ENCODE measurements at regions of chr22 and their contacts with region 1.

Region 1: GRCh38 chr22:34111210-34111824 is 191.0 kb upstream of the LARGE1 start:
- DNase-seq: peak; percentile 13 to 23
- H3K4me3 ChIP-seq: no peak overlapping the region
- H3K27ac ChIP-seq: no peak overlapping the region
- H3K4me1 ChIP-seq: no peaks in the 10 kb centered on the region
- H3K27me3 ChIP-seq: no peaks in the 10 kb centered on the region
- CTCF ChIP-seq: peak in 5 of 6 experiments; percentile 45 to 77 (median 49)
- POLR2A ChIP-seq: no peak

Region 2: DNA sequence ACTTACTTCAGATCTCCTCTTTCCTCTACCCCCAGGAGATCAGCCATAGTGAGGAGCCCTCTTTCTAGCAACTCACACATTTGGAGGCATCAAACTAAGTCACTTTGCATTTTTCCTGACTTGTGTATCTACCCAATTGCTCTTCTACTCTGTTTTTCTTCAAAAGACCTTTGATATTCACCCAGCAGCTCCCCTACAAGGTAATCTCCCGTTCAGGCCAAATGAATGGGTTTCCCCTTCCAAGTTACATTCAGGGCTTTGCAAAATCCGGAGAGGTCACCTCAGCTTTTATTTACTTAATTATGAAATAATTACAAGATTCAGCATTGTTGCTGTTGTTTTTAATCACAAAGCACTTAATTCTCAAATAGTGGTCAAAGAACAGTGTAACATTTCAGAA is 197.2 kb before region 1 on chr22:
- intact Hi-C with region 1: no loop called
- DNase-seq: no peak
- H3K4me3 ChIP-seq: no peak overlapping the region
- H3K27ac ChIP-seq: no peak overlapping the region
- H3K4me1 ChIP-seq: peaks cover 0 to 4% of the 10 kb centered on the region in 2 donors
- H3K27me3 ChIP-seq: no peaks in the 10 kb centered on the region
- CTCF ChIP-seq: no peak
- POLR2A ChIP-seq: no peak

Region 3: GRCh38 chr22:33925194-33925593 is 186.1 kb before region 1 on chr22:
- intact Hi-C with region 1: loop called (anchors 5 kb)
- DNase-seq: no peak
- H3K4me3 ChIP-seq: no peak overlapping the region
- H3K27ac ChIP-seq: no peak overlapping the region
- H3K4me1 ChIP-seq: peaks cover 10 to 17% of the 10 kb centered on the region in 2 donors
- H3K27me3 ChIP-seq: no peaks in the 10 kb centered on the region
- CTCF ChIP-seq: no peak
- POLR2A ChIP-seq: no peak

Region 4: GRCh38 chr22:33958741-33959140 is 152.6 kb before region 1 on chr22:
- intact Hi-C with region 1: no loop called
- DNase-seq: no peak
- H3K4me3 ChIP-seq: no peak overlapping the region
- H3K27ac ChIP-seq: no peak overlapping the region
- H3K4me1 ChIP-seq: no peaks in the 10 kb centered on the region
- H3K27me3 ChIP-seq: no peaks in the 10 kb centered on the region
- CTCF ChIP-seq: no peak
- POLR2A ChIP-seq: no peak